Naive thymus-derived CD4-positive, alpha-beta T cell (primary cell): ENCODE measurements at regions of chr1 and their contacts with region 1.

Region 1: GRCh38 chr1:192808518-192809306 is at the start of gene RGS2:
- DNase-seq: peak; percentile 79 to 88 (median 85)
- ATAC-seq: peak; percentile 94
- H3K4me3 ChIP-seq: peak within 1 kb of the TSS; percentile 91
- H3K4me3 Mint-ChIP-seq: peak within 1 kb of the TSS; percentile 92 to 99 (median 98)
- H3K27ac ChIP-seq: peak within 1 kb of the TSS; percentile 76
- H3K27ac Mint-ChIP-seq: peak within 1 kb of the TSS; percentile 91 to 98 (median 96)
- H3K4me1 ChIP-seq: peaks cover 0 to 27% of the 10 kb centered on the region in 2 donors
- H3K4me1 Mint-ChIP-seq: peaks cover 17 to 33% (median 26%) of the 10 kb centered on the region in 7 donors
- H3K27me3 ChIP-seq: no peaks in the 10 kb centered on the region
- H3K27me3 Mint-ChIP-seq: peaks cover 0 to 16% (median 0%) of the 10 kb centered on the region in 5 donors
- total RNA-seq, gene RGS2: 3.5 to 317 (median 12.2) TPM

Region 2: DNA sequence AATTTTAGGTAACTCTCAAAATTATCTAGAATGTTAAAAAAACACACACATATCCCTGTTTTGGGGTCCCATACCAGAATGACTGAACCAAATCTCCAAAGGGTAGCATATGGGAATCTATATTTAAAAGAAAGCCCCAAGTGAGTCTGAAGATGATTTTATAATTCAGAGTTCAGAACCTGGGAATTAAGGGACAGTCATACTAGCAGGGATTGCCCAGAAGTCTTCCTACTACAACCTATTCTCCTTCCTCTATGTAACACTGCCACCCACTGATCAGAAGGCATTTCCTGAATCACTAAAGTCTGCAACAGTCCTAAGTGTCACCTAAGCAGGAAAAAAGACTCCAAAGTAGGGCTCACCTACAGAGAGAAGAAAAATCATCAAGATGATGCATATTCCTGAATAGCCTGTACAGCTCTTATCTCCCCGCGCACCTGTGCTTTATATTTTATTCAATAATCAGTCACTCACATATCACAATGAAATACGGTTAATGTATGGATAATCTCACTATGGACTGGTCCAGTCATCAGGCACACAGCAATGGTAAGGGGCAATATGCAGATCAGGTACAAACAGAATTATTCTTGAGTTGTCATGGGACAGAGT is 228.3 kb before region 1 on chr1:
- CTCF ChIA-PET with region 1: no interaction called
- POLR2A ChIA-PET with region 1: no interaction called
- intact Hi-C with region 1: loop called (anchors 1 to 5 kb)
- DNase-seq: peak in 3 of 9 donors; percentile 15 to 44 (median 38)
- ATAC-seq: peak; percentile 40
- H3K4me3 ChIP-seq: no peak overlapping the region
- H3K4me3 Mint-ChIP-seq: peak overlapping the region in 2 of 10 donors; percentile 31 to 40
- H3K27ac ChIP-seq: no peak overlapping the region
- H3K27ac Mint-ChIP-seq: peak overlapping the region in 2 of 9 donors; percentile 8 to 43
- H3K4me1 ChIP-seq: peaks cover 7 to 15% of the 10 kb centered on the region in 2 donors
- H3K4me1 Mint-ChIP-seq: peaks cover 8 to 44% (median 28%) of the 10 kb centered on the region in 7 donors
- H3K27me3 ChIP-seq: no peaks in the 10 kb centered on the region
- H3K27me3 Mint-ChIP-seq: peaks cover 0 to 2% (median 0%) of the 10 kb centered on the region in 5 donors

Region 3: GRCh38 chr1:193019442-193020026 is 210.8 kb after region 1 on chr1:
- CTCF ChIA-PET with region 1: interaction called, 21 read pairs
- POLR2A ChIA-PET with region 1: interaction called, 4 read pairs
- intact Hi-C with region 1: loop called (anchors 1 kb)
- DNase-seq: peak in 6 of 9 donors; percentile 14 to 36 (median 22)
- ATAC-seq: peak; percentile 55
- H3K4me3 ChIP-seq: no peak overlapping the region
- H3K4me3 Mint-ChIP-seq: no peak overlapping the region
- H3K27ac ChIP-seq: no peak overlapping the region
- H3K27ac Mint-ChIP-seq: no peak overlapping the region
- H3K4me1 ChIP-seq: no peaks in the 10 kb centered on the region
- H3K4me1 Mint-ChIP-seq: no peaks in the 10 kb centered on the region
- H3K27me3 ChIP-seq: no peaks in the 10 kb centered on the region
- H3K27me3 Mint-ChIP-seq: no peaks in the 10 kb centered on the region

Region 4: GRCh38 chr1:193121616-193122593 is 313.2 kb after region 1 on chr1 and contains the start of gene CDC73:
- CTCF ChIA-PET with region 1: interaction called, 4 read pairs
- POLR2A ChIA-PET with region 1: interaction called, 13 read pairs
- intact Hi-C with region 1: loop called (anchors 1 kb)
- DNase-seq: peak; percentile 97 to 100 (median 99)
- ATAC-seq: peak; percentile 96
- H3K4me3 ChIP-seq: peak within 1 kb of the TSS; percentile 85
- H3K4me3 Mint-ChIP-seq: peak within 1 kb of the TSS; percentile 88 to 99 (median 95)
- H3K27ac ChIP-seq: peak within 1 kb of the TSS; percentile 91
- H3K27ac Mint-ChIP-seq: peak within 1 kb of the TSS; percentile 92 to 98 (median 96)
- H3K4me1 ChIP-seq: peaks cover 21 to 25% of the 10 kb centered on the region in 2 donors
- H3K4me1 Mint-ChIP-seq: peaks cover 33 to 68% (median 47%) of the 10 kb centered on the region in 7 donors
- H3K27me3 ChIP-seq: no peaks in the 10 kb centered on the region
- H3K27me3 Mint-ChIP-seq: peaks cover 0 to 11% (median 0%) of the 10 kb centered on the region in 5 donors
- total RNA-seq, gene CDC73: 57.6 to 65.0 (median 58.8) TPM

Region 5: DNA sequence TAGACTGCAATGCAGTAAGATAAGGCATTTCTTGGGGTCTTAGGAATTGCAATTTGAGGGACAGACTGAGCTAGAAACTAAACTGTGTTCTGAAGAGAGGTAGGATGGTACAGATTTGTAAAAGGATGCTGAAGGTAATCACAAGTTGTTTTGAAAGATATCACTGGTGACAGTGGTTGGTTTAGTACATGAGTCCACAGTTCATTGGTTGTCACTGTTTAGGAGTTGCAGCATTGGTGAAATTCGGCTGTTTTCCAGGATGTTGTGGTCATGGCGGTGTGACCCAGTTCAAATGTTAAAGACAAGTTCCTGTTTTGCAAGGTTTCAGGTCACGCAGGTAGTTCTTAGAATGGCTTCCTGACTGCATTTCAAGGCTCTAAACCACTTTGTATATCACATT is 670.5 kb after region 1 on chr1:
- CTCF ChIA-PET with region 1: no interaction called
- POLR2A ChIA-PET with region 1: no interaction called
- intact Hi-C with region 1: loop called in 1 of 2 experiments (anchors 5 kb)
- DNase-seq: peak; percentile 18 to 95 (median 91)
- ATAC-seq: peak; percentile 97
- H3K4me3 ChIP-seq: peak overlapping the region; percentile 24
- H3K4me3 Mint-ChIP-seq: peak overlapping the region; percentile 23 to 72 (median 60)
- H3K27ac ChIP-seq: peak overlapping the region; percentile 37
- H3K27ac Mint-ChIP-seq: peak overlapping the region; percentile 85 to 99 (median 94)
- H3K4me1 ChIP-seq: peaks cover 31 to 38% of the 10 kb centered on the region in 2 donors
- H3K4me1 Mint-ChIP-seq: peaks cover 27 to 72% (median 56%) of the 10 kb centered on the region in 7 donors
- H3K27me3 ChIP-seq: no peaks in the 10 kb centered on the region
- H3K27me3 Mint-ChIP-seq: no peaks in the 10 kb centered on the region